ENCODE measurements at regions of chr3 and their contacts with region 1.

Region 1: DNA sequence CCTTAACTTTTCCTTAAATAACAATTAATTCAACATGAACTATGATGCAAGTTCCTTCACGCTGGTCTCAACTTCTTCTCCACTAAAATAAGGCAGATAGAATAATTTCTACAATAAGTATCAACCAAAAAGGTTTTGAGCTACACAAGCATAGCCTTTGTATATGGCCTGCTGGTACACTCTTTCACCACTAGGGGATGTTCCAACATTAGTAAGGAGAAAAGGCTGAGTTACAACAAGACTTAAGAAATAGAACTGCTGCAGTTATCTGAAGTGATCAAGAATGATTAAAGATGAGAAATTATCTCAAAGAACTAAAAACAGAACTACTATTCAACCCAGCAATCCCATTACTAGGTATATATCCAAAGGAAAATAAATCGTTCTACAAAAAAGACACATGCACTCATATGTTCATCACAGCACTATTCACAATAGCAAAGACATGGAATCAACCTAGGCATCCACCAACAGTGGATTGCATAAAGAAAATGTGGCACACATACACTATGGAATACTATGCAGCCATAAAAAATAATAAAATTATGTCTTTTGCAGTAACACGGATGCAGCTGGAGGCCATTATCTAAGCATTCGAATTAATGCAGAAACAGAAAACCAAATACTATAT is 14.4 kb downstream of the ATP13A3 start:
- DNase-seq: peak; percentile 42
- H3K4me3 Mint-ChIP-seq: no peak overlapping the region
- H3K27ac Mint-ChIP-seq: no peak overlapping the region
- H3K4me1 Mint-ChIP-seq: peaks cover 24% of the 10 kb centered on the region
- H3K27me3 Mint-ChIP-seq: no peaks in the 10 kb centered on the region

Region 2: DNA sequence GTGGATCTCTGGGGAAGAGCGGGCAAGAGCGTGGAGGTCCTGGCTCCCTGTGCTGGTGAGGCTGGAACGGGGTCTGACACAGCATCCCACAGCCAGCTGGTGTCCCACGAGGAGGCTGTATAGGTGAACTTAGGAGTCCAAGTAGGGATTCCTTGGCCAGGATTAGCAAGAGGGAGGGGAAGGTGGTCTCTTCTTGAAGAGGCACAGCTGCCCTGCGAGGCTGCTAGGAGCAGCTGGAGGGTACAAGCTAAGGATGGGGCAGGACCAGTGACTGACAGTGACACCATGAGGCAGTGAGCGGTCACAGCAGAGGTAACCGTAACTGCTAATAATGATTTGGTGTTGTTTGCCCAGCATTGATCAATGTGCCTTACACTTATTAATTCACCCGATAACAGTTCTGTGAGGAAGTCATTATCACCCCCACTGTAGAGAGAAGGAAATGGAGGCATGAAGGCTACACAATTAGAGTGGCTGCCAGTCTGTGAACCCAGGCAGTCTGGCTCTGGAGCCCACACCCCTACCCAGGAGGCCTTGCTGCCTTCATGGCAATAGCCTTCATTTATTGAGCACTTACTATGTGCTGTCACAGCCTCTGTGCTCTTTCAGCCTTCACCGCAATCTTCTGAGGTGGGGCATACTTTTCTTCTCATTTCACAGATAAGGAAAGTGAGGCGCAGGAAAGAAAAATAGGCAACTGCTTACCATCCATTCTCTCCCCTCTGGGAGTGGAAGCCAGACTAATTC is 101.5 kb after region 1 on chr3:
- CTCF ChIA-PET with region 1: interaction called, 29 read pairs
- intact Hi-C with region 1: loop called (anchors 1 kb)
- DNase-seq: peak; percentile 68
- H3K4me3 Mint-ChIP-seq: no peak overlapping the region
- H3K27ac Mint-ChIP-seq: no peak overlapping the region
- H3K4me1 Mint-ChIP-seq: peaks cover 18% of the 10 kb centered on the region
- H3K27me3 Mint-ChIP-seq: peaks cover 19% of the 10 kb centered on the region

Region 3: DNA sequence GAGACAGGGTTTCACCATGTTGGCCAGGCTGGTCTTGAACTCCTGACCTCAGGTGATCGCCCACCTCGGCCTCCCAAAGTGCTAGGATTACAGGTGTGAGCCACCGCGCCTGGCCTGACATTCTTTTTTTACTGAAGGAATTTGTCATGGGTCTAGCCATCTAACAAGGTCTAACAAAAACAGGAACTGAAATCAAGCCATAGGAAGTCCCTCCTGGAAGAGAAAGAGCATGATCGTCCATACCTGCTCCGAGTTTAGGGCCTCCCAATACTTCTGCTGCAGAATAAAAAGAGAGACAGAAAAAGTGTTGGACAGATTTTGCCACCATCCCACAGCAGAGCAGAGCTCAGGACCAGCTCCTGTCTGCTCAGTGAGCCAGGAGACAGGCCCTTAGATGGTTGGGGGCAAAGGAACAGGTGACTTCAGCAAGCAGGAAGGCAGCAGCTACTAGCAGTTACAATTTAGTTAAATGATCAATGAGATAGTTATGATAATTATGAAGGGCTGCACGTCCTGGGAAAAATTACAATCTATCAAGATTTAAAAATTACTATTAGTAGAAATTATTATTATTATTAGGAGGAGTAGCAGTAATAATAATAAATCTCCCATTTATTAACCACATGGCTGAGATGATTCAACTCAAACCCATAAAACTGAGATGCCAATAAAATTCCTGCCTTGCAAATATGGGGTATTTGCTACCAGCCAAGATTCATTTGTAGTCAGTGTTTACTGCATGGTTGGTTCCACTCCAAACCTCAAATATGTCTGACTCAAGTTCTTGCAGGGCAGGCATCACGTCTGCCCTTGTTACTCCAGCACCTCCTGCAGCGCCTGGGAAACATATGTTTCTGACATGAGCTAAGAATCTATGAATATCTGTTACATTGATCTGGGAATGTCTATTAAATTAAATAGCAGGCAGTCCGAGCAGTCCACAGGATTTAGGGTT is 120.7 kb after region 1 on chr3:
- CTCF ChIA-PET with region 1: interaction called, 61 read pairs
- intact Hi-C with region 1: loop called (anchors 1 kb)
- DNase-seq: no peak
- H3K4me3 Mint-ChIP-seq: no peak overlapping the region
- H3K27ac Mint-ChIP-seq: no peak overlapping the region
- H3K4me1 Mint-ChIP-seq: peaks cover 3% of the 10 kb centered on the region
- H3K27me3 Mint-ChIP-seq: no peaks in the 10 kb centered on the region

Region 4: DNA sequence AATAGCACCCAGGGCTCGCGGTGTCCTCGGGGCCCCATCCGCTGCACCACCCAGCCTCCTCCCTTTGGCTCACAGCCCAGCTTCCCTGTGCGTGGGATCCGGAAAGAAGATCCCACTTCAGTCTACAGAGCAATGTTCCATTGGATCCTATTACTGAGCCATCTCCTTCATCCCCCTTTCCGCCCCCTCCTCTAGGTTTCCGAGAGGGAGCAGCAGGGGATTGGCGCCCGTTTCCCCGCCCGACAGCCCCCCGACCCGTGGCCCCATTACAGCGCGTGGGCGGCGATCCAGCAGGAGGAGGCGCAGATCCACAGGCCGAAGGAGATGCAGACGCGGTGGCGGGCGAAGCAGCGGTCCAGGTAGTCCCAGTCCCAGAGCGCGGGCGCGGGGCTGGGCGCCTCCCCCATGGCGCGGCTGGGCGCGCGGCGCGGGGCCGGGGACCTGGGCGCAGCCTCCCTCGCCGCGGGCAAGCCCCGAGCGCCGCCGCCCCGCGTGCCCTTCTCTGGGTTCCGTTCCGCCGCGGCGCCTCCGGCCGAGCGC is 160.5 kb after region 1 on chr3:
- CTCF ChIA-PET with region 1: interaction called, 6 read pairs
- intact Hi-C with region 1: loop called (anchors 1 kb)
- DNase-seq: peak; percentile 24
- H3K4me3 Mint-ChIP-seq: peak overlapping the region; percentile 85
- H3K27ac Mint-ChIP-seq: peak overlapping the region; percentile 53
- H3K4me1 Mint-ChIP-seq: peaks cover 6% of the 10 kb centered on the region
- H3K27me3 Mint-ChIP-seq: no peaks in the 10 kb centered on the region

Measured in activated naive CD4-positive, alpha-beta T cell treated with anti-CD3 and anti-CD28 coated beads for 36 hours (primary cell).